Activated CD4-positive, alpha-beta memory T cell treated with anti-CD3 and anti-CD28 coated beads for 36 hours (primary cell): ENCODE measurements at regions of chr5 and their contacts with region 1.

Region 1: DNA sequence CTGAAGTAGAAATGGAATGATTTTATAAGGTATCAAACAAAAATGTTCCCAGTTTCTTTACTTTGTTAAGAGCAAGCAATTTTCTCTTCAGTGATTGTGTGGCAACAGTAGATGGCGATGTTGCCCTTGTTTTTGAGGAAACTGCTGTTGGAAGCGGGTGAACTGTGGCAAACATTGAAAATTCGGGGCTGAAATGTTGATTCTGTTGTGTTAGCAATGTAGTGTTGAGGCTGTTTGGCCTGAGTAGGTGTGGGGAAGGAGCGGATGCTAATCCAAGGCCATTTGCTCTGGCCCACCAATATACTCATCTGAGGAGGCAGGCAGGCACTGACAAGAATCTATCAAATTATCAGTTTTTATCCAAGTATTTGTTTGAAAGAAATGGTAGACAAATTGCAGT is 129.8 kb downstream of the SLC12A2 start:
- DNase-seq: peak; percentile 45
- H3K4me3 Mint-ChIP-seq: no peak overlapping the region
- H3K27ac Mint-ChIP-seq: no peak overlapping the region
- H3K4me1 Mint-ChIP-seq: no peaks in the 10 kb centered on the region
- H3K27me3 Mint-ChIP-seq: peaks cover 4% of the 10 kb centered on the region

Region 2: GRCh38 chr5:128498844-128499455 is 285.6 kb after region 1 on chr5:
- CTCF ChIA-PET with region 1: no interaction called
- POLR2A ChIA-PET with region 1: no interaction called
- intact Hi-C with region 1: loop called (anchors 2 kb)
- DNase-seq: no peak
- H3K4me3 Mint-ChIP-seq: no peak overlapping the region
- H3K27ac Mint-ChIP-seq: no peak overlapping the region
- H3K4me1 Mint-ChIP-seq: no peaks in the 10 kb centered on the region
- H3K27me3 Mint-ChIP-seq: no peaks in the 10 kb centered on the region

Region 3: GRCh38 chr5:128674825-128675446 is 461.6 kb after region 1 on chr5:
- CTCF ChIA-PET with region 1: interaction called, 7 read pairs
- POLR2A ChIA-PET with region 1: no interaction called
- intact Hi-C with region 1: loop called (anchors 1 kb)
- DNase-seq: peak; percentile 53
- H3K4me3 Mint-ChIP-seq: no peak overlapping the region
- H3K27ac Mint-ChIP-seq: no peak overlapping the region
- H3K4me1 Mint-ChIP-seq: no peaks in the 10 kb centered on the region
- H3K27me3 Mint-ChIP-seq: peaks cover 3% of the 10 kb centered on the region

Region 4: DNA sequence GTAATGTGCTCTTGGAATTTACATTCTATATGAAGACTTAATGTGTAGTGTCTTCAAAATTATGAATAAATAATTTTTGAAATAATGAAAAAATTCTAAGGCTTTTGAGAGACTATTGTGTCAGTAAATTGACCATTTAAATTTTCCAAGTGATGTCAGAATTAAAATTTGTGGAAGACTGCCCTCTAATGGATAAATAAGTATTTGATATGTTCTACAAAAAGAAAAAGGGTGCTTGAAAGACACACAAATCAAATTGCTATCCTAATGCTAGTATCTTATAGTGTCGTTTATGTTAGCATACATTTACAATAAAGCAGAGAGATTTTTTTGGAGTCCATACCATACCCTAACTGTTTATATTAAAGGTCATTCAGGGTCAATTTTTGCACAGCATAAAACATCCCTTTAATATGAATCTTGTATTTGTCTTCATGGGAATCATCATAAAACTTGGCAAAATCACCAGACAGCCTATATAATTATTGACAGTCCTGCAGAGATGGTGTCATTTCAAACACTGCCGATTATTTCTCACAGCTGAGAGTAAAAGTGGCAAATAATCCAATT is 631.1 kb after region 1 on chr5:
- CTCF ChIA-PET with region 1: no interaction called
- POLR2A ChIA-PET with region 1: no interaction called
- intact Hi-C with region 1: loop called (anchors 2 kb)
- DNase-seq: no peak
- H3K4me3 Mint-ChIP-seq: no peak overlapping the region
- H3K27ac Mint-ChIP-seq: no peak overlapping the region
- H3K4me1 Mint-ChIP-seq: no peaks in the 10 kb centered on the region
- H3K27me3 Mint-ChIP-seq: no peaks in the 10 kb centered on the region

Region 5: GRCh38 chr5:129852747-129853352 is 1639.5 kb after region 1 on chr5:
- CTCF ChIA-PET with region 1: no interaction called
- POLR2A ChIA-PET with region 1: no interaction called
- intact Hi-C with region 1: loop called (anchors 5 kb)
- DNase-seq: peak; percentile 80
- H3K4me3 Mint-ChIP-seq: no peak overlapping the region
- H3K27ac Mint-ChIP-seq: no peak overlapping the region
- H3K4me1 Mint-ChIP-seq: peaks cover 2% of the 10 kb centered on the region
- H3K27me3 Mint-ChIP-seq: peaks cover 5% of the 10 kb centered on the region